Heart right ventricle (tissue), 16 donors: ENCODE measurements at regions of chr16 and their contacts with region 1.

Region 1: DNA sequence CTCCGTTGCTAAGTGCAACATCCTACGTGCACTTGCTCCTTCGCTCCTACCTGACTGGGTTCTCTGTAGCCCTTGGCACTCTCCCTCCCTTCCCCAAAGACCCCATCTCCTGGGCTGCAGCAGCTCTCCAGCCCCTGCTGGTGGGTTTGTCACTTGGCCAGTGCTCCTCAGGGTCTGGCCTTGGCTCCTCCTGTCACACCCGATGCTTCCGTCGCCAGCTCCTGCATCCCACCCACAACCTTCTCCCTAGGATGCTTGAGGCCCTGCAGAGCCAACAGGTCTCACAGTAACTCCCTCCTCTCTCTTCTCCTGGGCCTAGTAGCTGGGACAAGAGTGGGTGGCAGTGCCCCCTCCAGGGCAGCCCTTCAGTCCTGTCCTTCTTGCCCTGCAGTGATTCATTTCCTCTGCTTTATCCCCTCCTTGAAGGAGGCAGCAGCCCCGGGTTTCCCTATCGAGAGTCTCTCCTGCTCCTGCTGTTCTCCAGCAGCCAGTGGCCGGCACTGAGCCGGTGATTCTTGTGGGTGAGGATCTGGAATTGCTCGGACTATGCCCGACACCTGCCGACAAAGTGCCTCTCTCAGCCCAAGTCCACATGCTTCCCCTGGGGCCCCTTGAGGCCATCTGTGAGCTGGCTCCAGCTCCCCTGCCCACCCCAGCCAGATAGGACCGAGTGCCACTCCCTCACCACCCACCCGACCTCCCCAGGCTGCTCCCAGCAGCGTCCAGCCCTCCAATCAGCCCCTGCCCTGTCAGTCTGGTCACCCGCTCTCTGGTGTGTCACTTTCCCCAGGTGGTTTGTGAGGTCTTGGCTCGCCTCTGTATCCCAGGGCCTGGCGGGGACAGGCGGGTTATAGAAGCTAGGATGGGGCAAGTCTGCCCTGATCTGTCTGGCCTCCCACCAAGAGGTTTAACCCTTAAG is 3.8 kb downstream of the LITAFD start:
- DNase-seq: no peak
- ATAC-seq: peak in 6 of 8 donors; percentile 16 to 41 (median 26)
- H3K4me3 ChIP-seq: no peak overlapping the region
- H3K27ac ChIP-seq: no peak overlapping the region
- H3K4me1 ChIP-seq: peaks cover 0 to 31% (median 21%) of the 10 kb centered on the region in 9 donors
- H3K27me3 ChIP-seq: peaks cover 0 to 21% (median 0%) of the 10 kb centered on the region in 7 donors
- CTCF ChIP-seq: no peak

Region 2: DNA sequence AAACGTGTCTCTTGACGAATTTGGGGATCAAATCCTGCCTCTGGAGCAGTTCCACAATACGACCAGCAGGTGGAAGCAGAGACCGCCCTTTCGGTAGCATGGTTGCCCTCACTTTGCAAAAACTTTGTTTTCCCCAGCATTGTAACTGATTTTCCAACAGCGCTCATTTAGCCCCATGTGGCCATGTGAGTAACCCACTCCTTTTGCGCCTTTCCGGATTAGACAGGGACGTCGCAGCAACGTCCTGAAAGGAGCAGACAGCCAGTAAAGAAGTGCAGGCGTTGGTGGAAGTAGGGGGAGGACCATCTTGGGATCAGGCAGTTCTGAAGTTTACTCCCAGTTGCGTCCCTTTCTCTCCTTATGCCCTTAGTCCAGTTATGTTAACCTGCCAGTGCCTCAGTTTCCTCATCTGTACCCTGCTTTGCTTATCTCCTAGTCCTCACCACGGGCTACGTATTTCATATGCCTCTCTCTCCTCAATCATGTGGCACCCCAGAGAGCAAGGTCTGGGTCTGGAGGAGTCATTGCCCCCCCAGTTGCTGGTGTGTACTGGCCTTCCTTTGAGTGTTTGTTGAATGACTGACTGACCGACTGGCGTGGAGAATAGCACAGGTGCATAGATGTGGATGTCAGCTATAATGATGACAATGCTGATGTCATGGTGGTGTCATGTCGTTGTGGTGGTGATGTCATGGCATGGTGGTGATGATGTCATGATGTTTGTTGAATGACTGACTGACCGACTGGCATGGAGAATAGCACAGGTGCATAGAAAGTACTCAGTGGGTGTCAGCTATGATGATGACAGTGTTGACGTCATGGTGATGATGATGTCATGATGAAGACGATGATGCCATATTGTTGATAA is 317.9 kb before region 1 on chr16:
- intact Hi-C with region 1: loop called in 7 of 10 experiments (anchors 2 to 10 kb)
- DNase-seq: peak; percentile 40 to 70
- ATAC-seq: peak; percentile 65 to 84 (median 74)
- H3K4me3 ChIP-seq: no peak overlapping the region
- H3K27ac ChIP-seq: no peak overlapping the region
- H3K4me1 ChIP-seq: peaks cover 0 to 20% (median 0%) of the 10 kb centered on the region in 9 donors
- H3K27me3 ChIP-seq: peaks cover 0 to 18% (median 10%) of the 10 kb centered on the region in 7 donors
- CTCF ChIP-seq: peak; percentile 93 to 98 (median 97)